ENCODE measurements at regions of chr1 and their contacts with region 1.

Region 1: DNA sequence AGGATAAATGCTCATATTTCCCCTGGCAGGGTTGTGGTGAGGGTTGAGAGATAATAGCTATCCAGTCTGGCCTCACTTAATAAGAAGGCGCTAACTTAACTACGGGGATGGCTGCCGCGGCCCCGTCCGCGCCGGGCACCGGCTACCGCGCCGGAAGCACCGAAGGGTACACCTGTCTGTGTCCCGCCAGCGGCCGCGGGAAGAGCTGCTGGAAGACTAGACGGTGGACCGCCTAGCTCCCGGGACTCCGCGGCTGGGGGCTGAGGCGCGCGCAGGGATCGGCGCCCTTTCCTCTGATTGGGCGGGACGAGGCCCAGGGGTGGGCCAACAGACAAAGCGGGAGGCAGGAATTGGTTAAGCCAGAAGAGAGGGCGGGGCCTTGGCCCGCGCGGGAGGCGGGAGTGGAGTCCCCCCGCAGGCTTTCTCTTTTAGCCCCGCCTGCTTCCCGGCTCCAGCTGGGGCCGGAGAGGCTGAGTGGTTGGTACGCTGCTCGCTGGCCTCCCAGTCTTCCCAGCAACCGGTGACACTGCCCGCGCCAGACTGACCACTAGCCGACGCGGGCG is at the start of gene ZNF672:
- DNase-seq: peak; percentile 97
- H3K4me3 Mint-ChIP-seq: no peak within 1 kb of the TSS
- H3K27ac Mint-ChIP-seq: peak within 1 kb of the TSS; percentile 98
- H3K4me1 Mint-ChIP-seq: peaks cover 33% of the 10 kb centered on the region
- H3K27me3 Mint-ChIP-seq: no peaks in the 10 kb centered on the region

Region 2: DNA sequence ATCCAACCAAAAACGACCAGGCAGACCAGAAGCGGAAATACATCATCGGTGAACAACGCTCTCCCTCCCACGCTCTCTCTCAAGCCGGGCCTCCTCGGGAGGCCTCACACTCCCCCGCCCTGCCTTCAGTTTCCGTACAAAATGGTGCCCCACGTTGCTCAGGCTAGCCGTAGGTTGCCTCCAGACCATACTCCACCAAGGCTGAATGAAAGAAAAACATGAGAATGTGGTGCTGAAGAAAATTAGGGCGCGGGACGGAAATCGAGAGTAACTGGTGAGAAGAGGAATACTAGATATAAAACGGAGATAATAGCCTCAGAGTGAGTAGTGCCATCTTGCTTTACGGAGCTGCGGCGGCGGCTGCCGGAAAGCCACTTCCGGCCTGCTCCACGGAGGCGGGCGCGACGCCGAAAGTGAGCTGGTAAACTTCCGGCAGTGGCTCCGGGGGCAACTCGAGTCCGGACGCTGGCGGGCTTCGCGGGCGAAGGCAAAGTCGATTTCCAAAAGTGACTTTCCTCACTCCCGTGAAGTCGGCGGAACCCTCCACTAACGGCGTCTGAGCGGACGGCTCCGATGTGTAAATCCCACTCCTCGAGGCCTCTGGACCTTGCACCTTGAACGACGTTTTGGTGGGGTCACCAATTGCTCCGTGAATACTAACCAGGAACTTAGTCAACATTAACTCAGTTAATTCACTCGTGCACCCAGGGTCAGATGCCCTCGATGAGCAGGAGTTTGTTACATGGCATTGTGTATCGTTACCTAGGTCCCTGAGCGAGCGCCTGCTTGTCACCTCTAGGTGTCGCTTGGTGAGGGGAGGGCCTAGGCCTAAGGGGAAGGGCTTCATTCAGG is 11.7 kb before region 1 on chr1 and contains the start of gene SH3BP5L:
- CTCF ChIA-PET with region 1: interaction called, 22 read pairs
- DNase-seq: peak; percentile 93
- H3K4me3 Mint-ChIP-seq: peak within 1 kb of the TSS; percentile 89
- H3K27ac Mint-ChIP-seq: peak within 1 kb of the TSS; percentile 99
- H3K4me1 Mint-ChIP-seq: peaks cover 57% of the 10 kb centered on the region
- H3K27me3 Mint-ChIP-seq: peaks cover 3% of the 10 kb centered on the region

Region 3: GRCh38 chr1:248858891-248859889 is 21.3 kb after region 1 on chr1 and contains the start of gene ZNF692:
- CTCF ChIA-PET with region 1: interaction called, 19 read pairs
- DNase-seq: peak; percentile 98
- H3K4me3 Mint-ChIP-seq: peak within 1 kb of the TSS; percentile 89
- H3K27ac Mint-ChIP-seq: peak within 1 kb of the TSS; percentile 94
- H3K4me1 Mint-ChIP-seq: peaks cover 60% of the 10 kb centered on the region
- H3K27me3 Mint-ChIP-seq: peaks cover 5% of the 10 kb centered on the region

Region 4: GRCh38 chr1:248886237-248886895 is 48.5 kb after region 1 on chr1:
- CTCF ChIA-PET with region 1: no interaction called
- DNase-seq: no peak
- H3K4me3 Mint-ChIP-seq: no peak overlapping the region
- H3K27ac Mint-ChIP-seq: no peak overlapping the region
- H3K4me1 Mint-ChIP-seq: no peaks in the 10 kb centered on the region
- H3K27me3 Mint-ChIP-seq: peaks cover 13% of the 10 kb centered on the region

Measured in activated naive CD4-positive, alpha-beta T cell treated with anti-CD3 and anti-CD28 coated beads, Interleukin-2, amount 10 ng/mL, durations not matched to agents 7 days and 5 days (primary cell).